Activated CD4-positive, alpha-beta memory T cell treated with anti-CD3 and anti-CD28 coated beads for 36 hours (primary cell): ENCODE measurements at regions of chr3 and their contacts with region 1.

Region 1: DNA sequence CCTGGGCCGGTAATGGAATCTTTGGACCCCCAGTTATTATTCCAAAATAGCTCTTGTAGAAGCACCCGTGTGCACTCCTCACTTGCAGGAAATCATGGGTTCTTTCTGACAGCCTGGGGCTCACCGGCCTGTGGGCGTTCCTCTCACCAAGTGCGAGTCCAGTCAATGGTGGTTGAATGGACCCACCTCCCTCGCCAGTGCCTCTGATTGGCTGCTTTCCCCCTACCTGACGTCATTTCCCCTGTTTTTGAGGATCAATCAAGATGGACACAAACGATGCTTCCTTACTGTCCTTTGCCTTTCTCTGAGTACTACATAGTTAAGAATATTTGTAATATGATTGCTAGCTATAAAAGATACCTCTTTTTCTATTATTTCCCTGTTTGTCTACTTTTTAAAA is 18.1 kb downstream of the MOBP start:
- DNase-seq: no peak
- H3K4me3 Mint-ChIP-seq: no peak overlapping the region
- H3K27ac Mint-ChIP-seq: no peak overlapping the region
- H3K4me1 Mint-ChIP-seq: no peaks in the 10 kb centered on the region
- H3K27me3 Mint-ChIP-seq: peaks cover 7% of the 10 kb centered on the region

Region 2: DNA sequence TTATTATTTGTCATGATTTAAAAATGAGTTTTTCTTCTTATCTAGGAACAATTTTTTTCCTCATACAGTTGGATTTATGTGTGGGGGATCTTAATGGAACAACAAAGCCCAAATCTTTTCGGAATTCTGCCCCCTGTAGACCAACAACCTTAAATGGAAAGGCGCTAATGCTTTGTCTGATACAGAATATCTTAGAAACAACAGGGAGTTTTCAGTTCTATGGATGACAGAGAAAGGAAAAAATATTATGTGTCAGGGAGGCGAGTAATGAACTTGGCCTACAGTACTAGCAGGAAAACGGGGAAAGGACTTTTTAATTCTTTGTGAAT is 17.5 kb before region 1 on chr3:
- CTCF ChIA-PET with region 1: no interaction called
- POLR2A ChIA-PET with region 1: no interaction called
- intact Hi-C with region 1: no loop called
- DNase-seq: no peak
- H3K4me3 Mint-ChIP-seq: no peak overlapping the region
- H3K27ac Mint-ChIP-seq: no peak overlapping the region
- H3K4me1 Mint-ChIP-seq: no peaks in the 10 kb centered on the region
- H3K27me3 Mint-ChIP-seq: peaks cover 13% of the 10 kb centered on the region

Region 3: DNA sequence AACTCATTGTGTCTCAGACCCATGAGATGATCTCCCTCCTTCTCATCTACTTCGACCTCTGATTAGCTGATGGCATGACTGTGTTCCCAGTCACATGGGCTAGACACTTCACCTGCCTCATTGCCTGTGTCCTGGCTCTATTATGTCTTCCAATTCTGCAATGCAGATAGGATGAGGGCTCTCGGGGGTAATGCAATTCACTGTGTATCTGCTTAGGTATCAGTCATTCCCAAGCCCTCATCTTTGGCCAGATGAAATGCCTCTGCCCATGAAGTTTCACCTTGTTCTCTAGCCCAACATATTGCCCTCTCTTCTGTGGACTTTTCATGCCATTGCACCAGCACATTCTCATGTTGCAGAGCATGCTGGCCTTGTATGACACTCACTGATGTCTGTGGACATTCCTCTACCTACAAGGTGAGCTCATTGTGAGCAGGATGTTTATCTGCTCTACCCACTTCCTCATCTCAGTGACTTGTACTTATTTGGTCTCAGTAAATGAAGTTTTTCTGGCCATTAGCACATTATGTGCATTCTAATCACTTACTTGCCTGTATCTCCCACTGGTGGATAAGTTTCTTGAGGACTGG is 14.2 kb after region 1 on chr3:
- CTCF ChIA-PET with region 1: interaction called, 11 read pairs
- POLR2A ChIA-PET with region 1: no interaction called
- intact Hi-C with region 1: no loop called
- DNase-seq: no peak
- H3K4me3 Mint-ChIP-seq: no peak overlapping the region
- H3K27ac Mint-ChIP-seq: no peak overlapping the region
- H3K4me1 Mint-ChIP-seq: no peaks in the 10 kb centered on the region
- H3K27me3 Mint-ChIP-seq: peaks cover 29% of the 10 kb centered on the region

Region 4: DNA sequence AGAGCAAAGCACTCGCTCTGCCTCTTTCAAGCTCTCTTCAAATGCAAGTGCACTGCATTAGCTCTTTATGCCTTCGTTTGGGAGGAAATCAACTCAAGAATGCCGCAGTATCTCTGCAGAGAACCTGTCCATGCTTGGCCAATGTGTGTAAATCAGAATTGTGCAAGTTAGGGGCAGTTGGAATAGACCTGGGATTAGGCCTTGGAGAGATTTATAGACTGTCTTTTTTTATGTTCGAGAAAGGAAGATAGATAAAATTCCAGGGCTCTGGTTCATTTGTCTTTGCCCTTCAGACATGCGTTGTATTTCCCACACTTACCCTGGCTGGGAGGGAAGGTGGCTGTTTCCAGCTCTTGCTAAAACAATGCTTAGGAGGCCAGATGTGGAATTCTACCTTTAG is 145.6 kb after region 1 on chr3:
- CTCF ChIA-PET with region 1: no interaction called
- POLR2A ChIA-PET with region 1: no interaction called
- intact Hi-C with region 1: no loop called
- DNase-seq: no peak
- H3K4me3 Mint-ChIP-seq: no peak overlapping the region
- H3K27ac Mint-ChIP-seq: no peak overlapping the region
- H3K4me1 Mint-ChIP-seq: no peaks in the 10 kb centered on the region
- H3K27me3 Mint-ChIP-seq: no peaks in the 10 kb centered on the region